HepG2 (cell line): ENCODE measurements at regions of chr11 and their contacts with region 1.

Region 1: DNA sequence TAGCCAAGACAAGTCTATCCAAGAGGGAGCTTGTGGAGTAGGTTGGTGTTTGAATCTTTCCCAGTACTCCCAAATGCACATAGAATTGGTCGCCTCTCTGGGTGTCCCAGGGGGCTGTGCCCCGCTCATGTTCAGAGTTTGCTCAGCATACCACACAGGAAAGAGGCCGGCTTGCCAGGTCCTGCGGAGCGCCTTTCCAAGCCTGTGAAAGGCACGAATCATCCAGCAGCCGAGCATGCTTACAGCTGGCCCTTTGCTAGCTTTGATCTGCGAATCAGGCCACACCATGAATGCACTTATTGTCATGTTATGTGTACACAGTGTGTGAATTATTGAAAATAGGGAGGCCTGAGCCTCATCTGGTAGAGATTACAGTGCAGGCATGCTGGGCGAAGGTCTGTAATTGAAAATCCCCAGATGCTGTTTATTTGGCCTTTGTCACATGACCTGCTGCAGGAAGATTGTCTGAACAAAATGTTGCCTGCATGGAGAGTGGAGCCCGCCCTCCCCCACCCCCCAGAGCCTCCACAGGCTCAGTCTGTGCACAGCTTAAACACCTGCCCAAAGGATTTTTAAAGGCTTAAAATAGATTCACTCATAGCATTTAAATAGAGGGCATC is 163.3 kb upstream of the RASSF10 start:
- DNase-seq: peak; percentile 98
- ATAC-seq: peak; percentile 97
- H3K4me3 ChIP-seq: peak overlapping the region; percentile 38 to 66 (median 51)
- H3K27ac ChIP-seq: peak overlapping the region; percentile 99
- H3K4me1 ChIP-seq: peaks cover 68% of the 10 kb centered on the region
- H3K27me3 ChIP-seq: no peaks in the 10 kb centered on the region
- CTCF ChIP-seq: no peak
- EP300 ChIP-seq: peak; percentile 85 to 90
- POLR2A ChIP-seq: peak; percentile 59 to 82; a peak in 3 of 4 replicates
- RAD21 ChIP-seq: no peak

Region 2: GRCh38 chr11:12724301-12725046 is 121.4 kb before region 1 on chr11:
- CTCF ChIA-PET with region 1: no interaction called
- POLR2A ChIA-PET with region 1: no interaction called
- in situ Hi-C with region 1: no loop called
- intact Hi-C with region 1: no loop called
- DNase-seq: peak; percentile 64
- ATAC-seq: peak; percentile 36; the same call in 1 of the 3 replicates
- H3K4me3 ChIP-seq: no peak overlapping the region
- H3K27ac ChIP-seq: peak overlapping the region; percentile 28
- H3K4me1 ChIP-seq: peaks cover 55% of the 10 kb centered on the region
- H3K27me3 ChIP-seq: no peaks in the 10 kb centered on the region
- CTCF ChIP-seq: no peak
- EP300 ChIP-seq: no peak
- POLR2A ChIP-seq: no peak
- RAD21 ChIP-seq: no peak

Region 3: DNA sequence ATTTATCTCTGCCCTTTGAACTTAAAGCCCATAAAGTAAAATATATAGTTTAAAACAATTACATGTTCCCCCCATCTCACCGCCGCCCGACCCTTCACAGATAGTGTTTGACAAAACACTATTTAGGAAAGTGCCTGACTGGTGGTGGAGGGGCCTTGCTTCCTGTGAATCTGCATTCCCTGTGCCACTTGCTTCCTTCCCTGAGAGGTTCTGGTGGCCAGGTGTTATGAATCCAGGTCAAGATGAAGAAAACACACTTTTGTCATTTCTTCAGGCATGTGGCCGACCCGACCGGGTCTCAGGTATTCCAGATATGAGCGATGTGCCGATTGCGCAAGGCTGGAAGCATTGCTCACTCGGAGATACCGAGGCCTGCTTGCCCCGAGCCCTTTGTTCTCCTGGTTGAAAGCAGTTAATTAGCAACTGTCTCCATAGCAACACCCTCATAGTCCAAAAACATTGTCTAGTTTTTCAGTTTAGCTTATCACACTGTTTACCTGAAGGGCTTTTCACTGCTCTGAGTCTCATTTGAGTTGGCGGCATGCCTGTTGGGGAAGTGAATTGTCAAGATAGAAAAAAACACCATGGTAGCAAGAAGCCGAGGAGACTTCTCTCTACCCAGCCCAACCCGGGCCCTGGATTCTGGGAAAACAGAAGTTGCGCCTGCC is 43.3 kb before region 1 on chr11:
- CTCF ChIA-PET with region 1: no interaction called
- POLR2A ChIA-PET with region 1: interaction called, 19 read pairs
- in situ Hi-C with region 1: no loop called
- intact Hi-C with region 1: loop called (anchors 1 kb)
- DNase-seq: peak; percentile 99
- ATAC-seq: peak; percentile 94
- H3K4me3 ChIP-seq: peak overlapping the region in 1 of 3 experiments; percentile 25; a peak in 2 of 6 replicates
- H3K27ac ChIP-seq: peak overlapping the region; percentile 96
- H3K4me1 ChIP-seq: peaks cover 94% of the 10 kb centered on the region
- H3K27me3 ChIP-seq: no peaks in the 10 kb centered on the region
- CTCF ChIP-seq: no peak
- EP300 ChIP-seq: peak; percentile 95 to 98
- POLR2A ChIP-seq: peak in 1 of 2 experiments; percentile 57; a peak in 1 of 4 replicates
- RAD21 ChIP-seq: peak; percentile 13; the same call in 1 of the 2 replicates

Region 4: DNA sequence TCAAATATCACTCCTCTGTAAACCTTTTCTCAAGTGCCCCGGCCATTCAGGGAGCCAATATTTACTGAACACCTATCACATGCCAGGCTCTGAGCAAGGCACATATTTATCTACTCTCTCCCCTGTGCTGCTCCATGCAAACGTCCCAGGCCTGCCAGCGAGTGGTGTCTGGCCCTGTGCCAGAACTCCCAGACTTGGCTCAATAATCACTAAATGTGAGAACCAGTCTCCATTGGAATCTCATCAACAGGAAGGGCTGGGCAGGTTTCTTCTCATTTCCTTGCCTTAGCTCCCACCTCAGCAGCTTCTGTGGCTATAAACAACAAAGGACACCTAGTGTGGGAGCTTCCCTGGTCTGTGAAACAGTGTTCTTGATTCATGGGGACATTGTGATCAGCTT is 185.0 kb after region 1 on chr11:
- CTCF ChIA-PET with region 1: no interaction called
- POLR2A ChIA-PET with region 1: no interaction called
- in situ Hi-C with region 1: no loop called
- intact Hi-C with region 1: no loop called
- DNase-seq: peak; percentile 14
- ATAC-seq: peak; percentile 31; the same call in 1 of the 3 replicates
- H3K4me3 ChIP-seq: no peak overlapping the region
- H3K27ac ChIP-seq: no peak overlapping the region
- H3K4me1 ChIP-seq: peaks cover 16% of the 10 kb centered on the region
- H3K27me3 ChIP-seq: peaks cover 0 to 27% of the 10 kb centered on the region in 2 experiments; a peak in 4 of 5 replicates
- CTCF ChIP-seq: no peak
- EP300 ChIP-seq: no peak
- POLR2A ChIP-seq: no peak
- RAD21 ChIP-seq: no peak

Region 5: GRCh38 chr11:13143486-13144297 is 297.8 kb after region 1 on chr11:
- CTCF ChIA-PET with region 1: no interaction called
- POLR2A ChIA-PET with region 1: no interaction called
- in situ Hi-C with region 1: no loop called
- intact Hi-C with region 1: no loop called
- DNase-seq: no peak
- ATAC-seq: no peak
- H3K4me3 ChIP-seq: no peak overlapping the region
- H3K27ac ChIP-seq: peak overlapping the region; percentile 99
- H3K4me1 ChIP-seq: peaks cover 74% of the 10 kb centered on the region
- H3K27me3 ChIP-seq: no peaks in the 10 kb centered on the region
- CTCF ChIP-seq: no peak
- EP300 ChIP-seq: no peak
- POLR2A ChIP-seq: no peak
- RAD21 ChIP-seq: no peak